Mammary epithelial cell (primary cell): ENCODE measurements at regions of chr1 and their contacts with region 1.

Region 1: GRCh38 chr1:209411491-209411929 is 172.0 kb upstream of the CAMK1G start:
- DNase-seq: peak; percentile 97
- H3K4me3 ChIP-seq: peak overlapping the region in 1 of 3 experiments; percentile 12
- H3K27ac ChIP-seq: peak overlapping the region; percentile 100
- H3K4me1 ChIP-seq: peaks cover 78% of the 10 kb centered on the region
- H3K27me3 ChIP-seq: no peaks in the 10 kb centered on the region
- CTCF ChIP-seq: no peak

Region 2: DNA sequence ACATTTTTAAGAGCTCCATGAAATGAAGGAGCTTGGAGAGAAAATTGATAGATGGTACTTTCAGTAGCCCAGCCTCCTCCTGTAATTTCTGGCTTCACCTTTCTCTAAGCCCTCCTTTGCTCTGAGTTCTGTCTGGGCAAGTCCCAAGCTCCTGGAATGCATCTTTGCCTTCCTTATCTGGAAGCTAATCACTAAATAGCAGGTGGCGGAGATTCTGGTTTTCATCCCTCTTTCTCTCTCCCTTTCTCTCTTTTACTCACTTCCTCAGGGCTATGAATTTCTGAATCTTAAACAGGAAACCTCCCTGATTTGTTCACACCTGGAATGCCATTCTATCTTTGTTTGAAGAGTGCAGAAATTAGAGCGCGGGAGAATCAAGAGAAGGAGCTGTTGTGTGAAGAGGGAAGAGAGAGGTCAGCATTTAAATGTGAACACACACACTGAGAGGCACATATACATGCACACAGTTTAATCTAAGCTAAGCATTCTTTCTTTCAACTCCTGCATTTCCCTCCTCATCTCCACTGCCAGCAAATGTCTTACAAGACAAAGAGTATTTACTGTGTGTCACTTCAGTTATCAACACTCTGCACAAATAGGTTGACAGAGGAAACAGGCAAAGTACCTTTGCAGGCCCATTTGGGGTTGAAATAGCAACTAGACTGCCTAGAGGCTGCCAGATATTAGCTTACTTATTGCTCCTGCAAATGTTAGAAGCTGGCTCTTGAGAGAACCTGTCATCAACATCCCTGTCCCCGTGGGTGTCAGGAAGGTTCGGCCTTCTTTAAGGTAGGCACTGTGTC is 27.4 kb before region 1 on chr1:
- CTCF ChIA-PET with region 1: interaction called, 3 read pairs
- dilution Hi-C with region 1: no loop called
- in situ Hi-C with region 1: no loop called
- intact Hi-C with region 1: loop called (anchors 1 kb)
- DNase-seq: peak; percentile 84
- H3K4me3 ChIP-seq: peak overlapping the region; percentile 5 to 27 (median 11)
- H3K27ac ChIP-seq: peak overlapping the region; percentile 98
- H3K4me1 ChIP-seq: peaks cover 77% of the 10 kb centered on the region
- H3K27me3 ChIP-seq: no peaks in the 10 kb centered on the region
- CTCF ChIP-seq: no peak

Region 3: GRCh38 chr1:209389258-209389657 is 22.3 kb before region 1 on chr1:
- CTCF ChIA-PET with region 1: no interaction called
- dilution Hi-C with region 1: no loop called
- in situ Hi-C with region 1: no loop called
- intact Hi-C with region 1: loop called (anchors 1 kb)
- DNase-seq: peak; percentile 98
- H3K4me3 ChIP-seq: no peak overlapping the region
- H3K27ac ChIP-seq: peak overlapping the region; percentile 98
- H3K4me1 ChIP-seq: peaks cover 64% of the 10 kb centered on the region
- H3K27me3 ChIP-seq: no peaks in the 10 kb centered on the region
- CTCF ChIP-seq: no peak

Region 4: DNA sequence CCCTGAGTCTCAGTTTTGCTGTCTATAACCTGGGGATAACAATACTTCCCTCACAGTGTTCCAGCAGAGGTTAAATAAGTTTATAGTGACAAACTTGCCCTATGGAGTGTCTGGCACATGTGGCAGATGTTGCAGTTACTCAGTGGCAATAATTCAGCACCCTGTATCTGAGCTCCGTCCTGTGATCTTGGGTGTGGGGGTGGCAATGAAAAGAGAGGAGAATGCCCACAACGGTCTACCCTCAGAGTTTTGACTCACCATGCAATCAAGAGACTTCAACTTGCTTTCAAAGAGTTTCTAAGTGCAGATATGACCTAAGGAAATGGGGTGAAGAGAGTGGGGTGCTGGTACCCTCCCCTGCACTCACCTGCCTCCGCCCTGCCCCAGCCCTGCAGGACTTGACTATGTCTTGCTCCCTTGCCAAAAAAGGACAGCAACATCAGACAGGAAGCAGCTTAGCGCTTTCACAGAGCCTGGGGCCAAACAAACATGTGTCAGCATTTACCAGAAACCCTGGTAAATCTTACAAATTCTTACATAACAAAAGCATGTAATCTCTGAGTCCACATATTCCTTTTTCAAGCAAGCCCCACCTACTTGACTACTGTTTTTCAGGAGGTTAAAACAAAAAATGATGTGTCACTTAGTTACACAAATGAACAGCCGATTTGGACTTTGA is 13.1 kb before region 1 on chr1:
- CTCF ChIA-PET with region 1: no interaction called
- dilution Hi-C with region 1: no loop called
- in situ Hi-C with region 1: no loop called
- intact Hi-C with region 1: loop called (anchors 1 kb)
- DNase-seq: peak; percentile 98
- H3K4me3 ChIP-seq: no peak overlapping the region
- H3K27ac ChIP-seq: peak overlapping the region; percentile 99
- H3K4me1 ChIP-seq: peaks cover 63% of the 10 kb centered on the region
- H3K27me3 ChIP-seq: no peaks in the 10 kb centered on the region
- CTCF ChIP-seq: no peak